ENCODE measurements at regions of chr6 and their contacts with region 1.

Region 1: GRCh38 chr6:167279766-167280446 is 11.2 kb upstream of the UNC93A start:
- DNase-seq: no peak
- H3K4me3 ChIP-seq: no peak overlapping the region
- H3K27ac ChIP-seq: no peak overlapping the region
- H3K4me1 ChIP-seq: no peaks in the 10 kb centered on the region
- H3K27me3 ChIP-seq: no peaks in the 10 kb centered on the region
- CTCF ChIP-seq: no peak

Region 2: GRCh38 chr6:167219967-167220512 is 59.9 kb before region 1 on chr6:
- intact Hi-C with region 1: loop called (anchors 5 kb)
- DNase-seq: no peak
- H3K4me3 ChIP-seq: no peak overlapping the region
- H3K27ac ChIP-seq: no peak overlapping the region
- H3K4me1 ChIP-seq: no peaks in the 10 kb centered on the region
- H3K27me3 ChIP-seq: no peaks in the 10 kb centered on the region
- CTCF ChIP-seq: no peak

Region 3: DNA sequence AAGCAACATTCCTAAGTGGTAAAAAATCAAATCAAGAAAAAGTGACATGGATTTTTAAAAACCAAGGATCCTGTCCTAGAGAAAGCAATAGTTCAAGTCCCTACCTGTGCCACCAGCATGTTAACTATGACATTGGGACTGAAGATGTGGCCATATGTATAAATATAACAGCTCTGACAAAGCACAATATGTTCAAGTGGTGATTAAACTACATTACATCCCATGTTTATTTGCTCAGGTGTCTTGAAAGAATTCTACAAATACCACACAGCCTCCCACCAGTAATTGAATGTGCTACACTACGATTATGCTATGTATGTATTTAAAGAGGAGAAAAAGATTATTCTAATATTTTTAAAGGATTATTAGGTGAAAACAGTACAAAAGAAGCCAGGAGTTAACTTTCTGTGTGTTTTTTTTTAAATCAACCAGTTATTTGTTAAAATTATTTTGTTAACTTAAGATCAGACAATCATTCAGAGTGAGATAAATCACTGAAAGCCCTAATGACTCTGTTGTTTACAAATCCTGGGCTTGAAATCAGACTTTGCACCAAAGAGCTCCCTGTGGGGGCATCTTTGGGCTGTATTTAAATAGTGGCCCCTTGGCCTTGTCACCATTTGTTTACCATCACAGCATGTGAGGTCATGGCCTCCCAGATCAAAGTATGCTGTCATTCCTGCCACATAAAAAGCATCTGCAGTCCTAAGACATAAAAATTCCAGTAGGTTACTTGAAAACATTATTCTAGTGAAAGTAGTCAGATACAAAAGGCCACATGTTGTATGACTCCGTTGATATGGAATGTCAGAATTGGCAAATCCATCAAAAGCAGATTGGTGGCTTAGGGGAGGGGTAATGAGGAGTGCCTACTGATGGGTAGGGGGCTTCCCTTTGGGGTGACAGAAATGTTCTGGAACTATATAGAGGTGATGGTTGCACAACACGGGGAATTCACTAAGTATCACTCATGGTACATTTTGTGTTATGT is 62.1 kb after region 1 on chr6:
- intact Hi-C with region 1: no loop called
- DNase-seq: no peak
- H3K4me3 ChIP-seq: no peak overlapping the region
- H3K27ac ChIP-seq: no peak overlapping the region
- H3K4me1 ChIP-seq: no peaks in the 10 kb centered on the region
- H3K27me3 ChIP-seq: no peaks in the 10 kb centered on the region
- CTCF ChIP-seq: no peak

Region 4: GRCh38 chr6:167996424-167997199 is 716.7 kb after region 1 on chr6:
- intact Hi-C with region 1: no loop called
- DNase-seq: no peak
- H3K4me3 ChIP-seq: no peak overlapping the region
- H3K27ac ChIP-seq: no peak overlapping the region
- H3K4me1 ChIP-seq: no peaks in the 10 kb centered on the region
- H3K27me3 ChIP-seq: no peaks in the 10 kb centered on the region
- CTCF ChIP-seq: no peak

Region 5: GRCh38 chr6:168078175-168078942 is 798.5 kb after region 1 on chr6:
- intact Hi-C with region 1: no loop called
- DNase-seq: no peak
- H3K4me3 ChIP-seq: peak overlapping the region; percentile 22
- H3K27ac ChIP-seq: peak overlapping the region; percentile 74
- H3K4me1 ChIP-seq: peaks cover 12% of the 10 kb centered on the region
- H3K27me3 ChIP-seq: no peaks in the 10 kb centered on the region
- CTCF ChIP-seq: no peak